H1 (cell line): ENCODE measurements at regions of chr17 and their contacts with region 1.

Region 1: GRCh38 chr17:28318759-28319660 is at the start of gene TMEM97:
- DNase-seq: peak; percentile 73 to 92
- H3K4me3 ChIP-seq: peak within 1 kb of the TSS; percentile 63 to 90 (median 70)
- H3K27ac ChIP-seq: peak within 1 kb of the TSS; percentile 56
- H3K4me1 ChIP-seq: peaks cover 4 to 26% (median 13%) of the 10 kb centered on the region in 4 experiments
- H3K27me3 ChIP-seq: peaks cover 0 to 3% (median 0%) of the 10 kb centered on the region in 4 experiments; a peak in 1 of 7 replicates
- CTCF ChIP-seq: no peak
- EP300 ChIP-seq: no peak
- POLR2A ChIP-seq: peak in 1 of 2 experiments; percentile 56; a peak in 1 of 3 replicates
- RAD21 ChIP-seq: no peak
- total RNA-seq, gene TMEM97: 130 and 136 TPM in 2 replicates

Region 2: GRCh38 chr17:28335201-28335955 is 16.4 kb after region 1 on chr17 and contains the starts of genes IFT20 and TNFAIP1:
- CTCF ChIA-PET with region 1: interaction called, 7 read pairs
- POLR2A ChIA-PET with region 1: interaction called, 30 read pairs
- DNase-seq: peak; percentile 94 to 100
- H3K4me3 ChIP-seq: peak within 1 kb of the TSS; percentile 87 to 95 (median 92)
- H3K27ac ChIP-seq: peak within 1 kb of the TSS; percentile 72
- H3K4me1 ChIP-seq: peaks cover 0 to 10% (median 8%) of the 10 kb centered on the region in 4 experiments; a peak in 6 of 7 replicates
- H3K27me3 ChIP-seq: no peaks in the 10 kb centered on the region
- CTCF ChIP-seq: no peak
- EP300 ChIP-seq: peak in 1 of 2 experiments; percentile 78; a peak in 1 of 3 replicates
- POLR2A ChIP-seq: peak in 1 of 2 experiments; percentile 64; a peak in 2 of 3 replicates
- RAD21 ChIP-seq: no peak
- total RNA-seq, gene IFT20: 19.3 and 21.0 TPM in 2 replicates
- total RNA-seq, gene TNFAIP1: 19.5 and 22.8 TPM in 2 replicates